ENCODE measurements at regions of chr4 and their contacts with region 1.

Region 1: DNA sequence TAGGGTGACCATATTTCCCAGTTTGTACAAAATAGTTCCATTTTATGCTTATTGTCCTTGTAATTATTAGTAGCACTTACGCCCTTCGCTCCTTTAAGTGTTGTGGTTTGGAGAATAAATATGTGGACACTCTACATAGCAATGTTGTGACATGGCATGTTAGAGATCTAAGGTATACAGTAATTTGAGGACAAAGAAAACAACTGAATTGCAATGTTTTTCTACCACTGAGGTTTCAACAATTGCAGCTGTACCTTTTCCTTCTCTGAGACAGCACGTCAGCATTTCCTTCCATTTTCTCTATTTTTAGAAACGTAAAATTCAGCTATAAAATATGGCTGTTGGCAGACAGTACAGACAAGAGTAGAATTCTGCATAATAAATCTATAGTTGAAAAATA is 323.1 kb downstream of the MAPK10 start:
- DNase-seq: peak in 1 of 2 experiments; percentile 63
- H3K4me3 ChIP-seq: no peak overlapping the region
- H3K27ac ChIP-seq: peak overlapping the region; percentile 64
- H3K4me1 ChIP-seq: peaks cover 16% of the 10 kb centered on the region
- H3K27me3 ChIP-seq: no peaks in the 10 kb centered on the region
- CTCF ChIP-seq: no peak

Region 2: DNA sequence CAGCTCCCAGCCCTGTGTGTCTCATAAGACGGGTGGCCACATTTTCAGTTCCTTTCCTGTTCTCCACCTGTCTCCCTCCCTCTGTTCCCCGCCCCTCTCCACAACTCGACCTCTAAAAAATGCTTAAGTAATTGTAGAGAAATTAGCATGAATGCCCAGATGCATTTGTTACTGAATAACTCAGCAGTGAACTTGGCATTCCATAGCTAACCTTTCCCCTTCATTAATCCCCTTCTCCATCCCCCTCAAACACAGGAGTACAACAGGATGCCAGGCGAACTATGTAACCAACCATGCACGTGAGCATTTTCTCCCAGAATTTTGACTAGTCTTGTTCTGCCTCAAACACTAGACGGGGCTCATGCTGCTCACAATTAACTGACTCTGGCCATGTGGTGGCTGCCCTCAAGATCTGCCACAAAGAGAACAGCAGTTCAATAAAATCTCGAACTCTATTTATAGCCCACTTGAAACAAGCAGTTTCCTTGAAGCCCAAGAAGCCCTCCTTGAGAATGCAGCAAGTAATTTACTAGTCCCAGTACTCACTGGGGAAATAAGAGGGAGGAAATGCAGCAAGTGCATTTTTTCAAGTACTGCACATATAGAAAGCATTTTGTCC is 210.6 kb before region 1 on chr4:
- CTCF ChIA-PET with region 1: no interaction called
- POLR2A ChIA-PET with region 1: interaction called, 12 read pairs
- intact Hi-C with region 1: no loop called
- DNase-seq: no peak
- H3K4me3 ChIP-seq: no peak overlapping the region
- H3K27ac ChIP-seq: no peak overlapping the region
- H3K4me1 ChIP-seq: no peaks in the 10 kb centered on the region
- H3K27me3 ChIP-seq: no peaks in the 10 kb centered on the region
- CTCF ChIP-seq: no peak

Region 3: GRCh38 chr4:86019906-86020305 is 16.8 kb before region 1 on chr4:
- CTCF ChIA-PET with region 1: no interaction called
- POLR2A ChIA-PET with region 1: interaction called, 11 read pairs
- intact Hi-C with region 1: no loop called
- DNase-seq: no peak
- H3K4me3 ChIP-seq: no peak overlapping the region
- H3K27ac ChIP-seq: no peak overlapping the region
- H3K4me1 ChIP-seq: no peaks in the 10 kb centered on the region
- H3K27me3 ChIP-seq: no peaks in the 10 kb centered on the region
- CTCF ChIP-seq: no peak